Panc1 (cell line): ENCODE measurements at regions of chr10 and their contacts with region 1.

Region 1: DNA sequence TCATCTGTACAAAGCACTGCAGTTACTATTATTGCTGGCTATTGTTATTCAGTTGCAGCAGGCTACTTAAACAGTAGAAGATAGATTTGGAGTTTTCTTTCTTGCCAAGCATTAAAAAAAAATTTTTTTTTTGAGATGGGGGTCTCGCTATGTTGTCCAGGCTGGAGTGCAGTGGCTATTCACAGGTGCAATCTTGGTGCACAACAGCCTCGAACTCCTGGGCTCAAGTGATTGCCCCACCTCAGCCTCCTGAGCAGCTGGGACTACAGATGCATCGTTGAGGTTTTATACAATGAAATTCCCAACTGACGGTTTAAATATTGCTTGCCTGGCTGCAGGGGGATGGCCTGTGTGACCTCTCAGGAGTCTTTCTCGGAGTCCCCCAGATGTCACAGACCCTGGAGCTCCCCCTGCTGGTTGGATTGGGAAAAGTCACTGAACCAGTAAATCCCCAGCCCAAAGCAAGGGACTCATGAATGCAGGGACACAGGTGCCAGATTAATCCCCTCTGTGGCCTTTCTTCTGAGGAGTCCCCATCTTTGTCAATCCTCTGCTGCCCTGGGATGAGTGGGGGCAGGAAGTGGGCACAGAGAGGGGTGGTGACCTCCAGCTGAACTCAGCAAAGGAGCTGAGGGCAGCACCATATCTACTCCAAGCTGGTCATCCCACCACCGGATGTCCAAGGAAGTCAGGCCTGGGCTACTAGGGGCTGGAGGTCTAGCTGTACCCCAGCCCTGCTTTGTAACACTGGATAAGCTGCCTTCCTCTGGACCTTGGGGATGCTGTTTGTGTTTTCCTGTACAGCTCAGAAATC is 149.6 kb downstream of the C10orf105 start:
- DNase-seq: peak; percentile 38
- ATAC-seq: peak; percentile 74
- H3K4me3 ChIP-seq: no peak overlapping the region
- H3K27ac ChIP-seq: no peak overlapping the region
- H3K4me1 ChIP-seq: peaks cover under 1% of the 10 kb centered on the region; the same call in 1 of the 2 replicates
- H3K27me3 ChIP-seq: no peaks in the 10 kb centered on the region
- CTCF ChIP-seq: peak; percentile 96

Region 2: DNA sequence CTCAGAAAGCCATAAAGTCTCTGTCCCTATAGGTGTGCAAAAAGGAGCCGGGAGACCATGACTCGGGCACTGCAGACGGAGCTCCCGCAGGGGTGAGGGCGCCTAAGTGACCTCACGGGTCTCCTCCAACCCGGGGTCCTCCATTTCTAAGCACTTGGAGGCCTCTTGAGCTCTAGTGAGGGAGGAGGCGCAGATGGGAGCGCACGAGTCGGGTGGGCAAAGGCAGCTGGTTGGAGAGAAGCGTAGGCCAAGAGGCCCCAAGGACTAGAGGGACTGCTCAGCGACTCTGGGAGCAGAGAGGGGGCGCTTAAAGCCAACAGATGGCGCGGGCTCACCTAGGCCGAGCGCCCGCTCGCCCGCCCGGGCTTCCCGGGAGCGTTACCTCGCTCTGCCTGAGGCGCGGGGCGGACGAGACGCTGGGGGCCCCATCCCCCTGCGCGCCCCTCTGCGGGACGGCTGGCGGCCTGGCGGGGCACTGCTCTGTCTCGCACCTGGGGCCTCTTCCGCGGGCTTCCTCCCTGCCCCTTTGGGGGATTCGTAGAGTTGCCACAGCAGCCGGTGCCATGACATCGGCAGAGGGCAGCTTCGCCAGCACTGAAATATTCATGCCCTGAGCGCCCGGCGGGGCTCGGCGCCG is 173.8 kb before region 1 on chr10:
- CTCF ChIA-PET with region 1: interaction called, 9 read pairs
- POLR2A ChIA-PET with region 1: no interaction called
- in situ Hi-C with region 1: no loop called
- intact Hi-C with region 1: loop called (anchors 2 kb)
- DNase-seq: no peak
- ATAC-seq: peak; percentile 95
- H3K4me3 ChIP-seq: peak overlapping the region; percentile 53 to 62
- H3K27ac ChIP-seq: no peak overlapping the region; the same call in 1 of the 2 replicates
- H3K4me1 ChIP-seq: 0 out of 2 replicates have a peak, but pooled peaks cover 5% of the 10 kb centered on the region
- H3K27me3 ChIP-seq: peaks cover 12% of the 10 kb centered on the region
- CTCF ChIP-seq: peak; percentile 92